Thyroid gland (tissue), 4 donors: ENCODE measurements at regions of chr9 and their contacts with region 1.

Region 1: DNA sequence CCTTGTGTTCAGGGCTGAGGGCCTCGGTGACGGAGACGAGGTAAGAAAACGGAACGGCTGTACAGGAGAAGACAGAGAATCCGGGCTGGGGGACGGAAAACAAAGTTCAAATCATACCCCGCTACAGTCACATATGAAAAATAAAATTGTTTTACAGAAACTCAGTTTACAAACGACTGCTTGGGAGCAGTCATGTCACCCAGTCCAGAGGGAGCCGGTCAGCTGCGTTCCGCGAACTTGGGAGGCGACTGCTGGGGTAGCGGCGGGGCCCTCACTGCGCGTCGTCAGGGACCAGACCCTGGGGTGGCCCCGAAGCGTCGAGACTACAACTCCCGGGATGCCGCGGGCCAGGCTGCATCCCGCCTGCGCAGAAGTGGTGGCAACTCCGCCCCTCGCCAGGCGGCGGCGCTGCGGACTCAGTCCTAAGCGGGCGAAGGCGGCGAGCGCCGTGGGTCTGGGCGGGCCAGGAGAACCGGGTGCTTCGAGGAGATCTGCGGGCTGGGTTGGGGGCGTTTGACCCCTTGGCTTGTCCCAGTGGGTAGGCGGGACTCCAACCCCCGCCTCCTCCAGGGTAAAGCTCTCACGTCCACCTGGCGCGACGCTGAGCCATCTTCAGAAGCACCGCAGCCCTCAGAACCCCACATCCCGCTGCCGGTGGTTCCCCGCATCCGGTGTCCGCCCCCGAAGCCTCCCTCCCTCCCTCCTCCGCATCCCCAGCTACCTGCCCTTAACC is 4.0 kb downstream of the SIT1 start:
- DNase-seq: peak; percentile 93 to 94
- H3K4me3 ChIP-seq: peak overlapping the region; percentile 17 to 54 (median 39)
- H3K27ac ChIP-seq: peak overlapping the region; percentile 78 to 92 (median 90)
- H3K4me1 ChIP-seq: peaks cover 5 to 13% of the 10 kb centered on the region in 2 donors
- H3K27me3 ChIP-seq: no peaks in the 10 kb centered on the region
- CTCF ChIP-seq: peak; percentile 83 to 99 (median 96)
- POLR2A ChIP-seq: peak; percentile 62 to 95

Region 2: DNA sequence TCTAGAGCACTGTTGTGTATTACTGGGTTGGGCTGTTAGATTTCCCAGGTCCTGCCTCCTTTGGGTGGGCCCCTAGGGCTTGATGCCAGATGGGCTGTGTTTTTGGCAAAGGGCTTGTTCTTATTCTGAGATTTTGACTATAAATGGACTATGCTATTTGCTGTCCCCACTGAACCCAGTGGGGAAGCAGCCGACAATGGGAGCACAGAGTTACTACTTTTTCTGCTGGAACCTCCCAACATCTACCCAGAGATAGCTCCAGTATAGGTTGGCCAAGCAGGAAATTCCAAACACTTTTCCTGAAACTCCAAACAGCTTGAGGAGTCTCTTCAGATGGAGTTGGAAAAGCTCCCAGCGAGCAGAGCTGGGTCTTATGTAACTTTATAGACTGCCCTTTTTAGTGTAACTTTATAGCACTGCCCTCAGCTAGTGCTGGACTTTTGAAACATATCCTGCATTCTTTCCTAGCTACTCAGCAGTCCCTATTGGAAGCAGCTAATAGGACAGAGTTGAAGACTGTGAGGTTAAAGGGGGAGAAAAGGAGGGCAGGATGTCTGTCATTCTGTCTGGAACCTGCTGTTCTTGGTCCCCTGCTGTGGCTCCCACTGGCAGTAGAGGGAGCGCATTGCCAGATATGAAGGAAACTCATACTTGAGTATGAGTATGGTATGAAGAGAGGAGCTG is 135.8 kb before region 1 on chr9:
- intact Hi-C with region 1: no loop called
- DNase-seq: peak; percentile 50 to 60
- H3K4me3 ChIP-seq: no peak overlapping the region
- H3K27ac ChIP-seq: peak overlapping the region; percentile 85 to 93 (median 88)
- H3K4me1 ChIP-seq: peaks cover 34 to 49% of the 10 kb centered on the region in 2 donors
- H3K27me3 ChIP-seq: no peaks in the 10 kb centered on the region
- CTCF ChIP-seq: peak in 3 of 6 experiments; percentile 8 to 30 (median 11)
- POLR2A ChIP-seq: peak in 1 of 2 donors; percentile 18

Region 3: DNA sequence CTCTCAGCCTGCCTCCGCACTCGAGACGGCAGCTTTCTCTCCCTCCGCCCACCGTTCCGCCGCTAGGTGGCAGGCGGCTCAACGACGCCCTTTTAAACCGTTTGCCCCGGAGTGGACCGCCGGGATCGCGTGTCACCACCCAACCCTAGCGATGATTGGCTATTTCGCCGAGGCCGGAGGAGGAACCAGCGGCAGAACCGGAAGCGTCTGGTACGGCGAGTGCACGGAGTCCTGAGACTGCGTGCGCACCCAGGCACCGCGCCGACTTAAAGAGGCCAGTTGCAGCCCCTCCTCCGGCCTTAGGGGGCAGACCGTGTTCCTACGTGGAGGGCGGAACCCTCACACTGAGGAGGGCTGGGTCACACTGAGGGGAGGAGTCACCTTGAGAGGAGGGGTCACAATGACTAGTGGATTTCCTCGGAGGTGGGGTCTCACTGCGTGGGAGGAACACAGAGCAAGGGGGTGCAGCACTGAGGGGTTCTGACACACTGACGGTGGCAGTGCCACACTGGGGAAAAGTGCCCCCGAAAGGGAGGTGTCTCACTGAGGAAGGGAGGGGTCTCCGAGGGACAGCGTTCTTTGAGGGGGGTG is 42.6 kb before region 1 on chr9:
- intact Hi-C with region 1: loop called (anchors 5 kb)
- DNase-seq: peak; percentile 100
- H3K4me3 ChIP-seq: peak overlapping the region; percentile 8 to 91 (median 76)
- H3K27ac ChIP-seq: peak overlapping the region; percentile 81 to 93 (median 87)
- H3K4me1 ChIP-seq: peaks cover 12 to 26% of the 10 kb centered on the region in 2 donors
- H3K27me3 ChIP-seq: no peaks in the 10 kb centered on the region
- CTCF ChIP-seq: peak; percentile 74 to 98 (median 94)
- POLR2A ChIP-seq: peak in 1 of 2 donors; percentile 91

Region 4: GRCh38 chr9:35732122-35732799 is 85.6 kb after region 1 on chr9 and contains the starts of genes CREB3 and TLN1:
- intact Hi-C with region 1: loop called (anchors 5 kb)
- DNase-seq: peak; percentile 99
- H3K4me3 ChIP-seq: peak within 1 kb of the TSS; percentile 82 to 90 (median 83)
- H3K27ac ChIP-seq: peak within 1 kb of the TSS; percentile 88 to 96 (median 89)
- H3K4me1 ChIP-seq: peaks cover 50 to 52% of the 10 kb centered on the region in 2 donors
- H3K27me3 ChIP-seq: no peaks in the 10 kb centered on the region
- CTCF ChIP-seq: no peak
- POLR2A ChIP-seq: peak in 1 of 2 donors; percentile 86
- total RNA-seq, gene CREB3: 44.9 to 73.0 (median 51.3) TPM
- total RNA-seq, gene TLN1: 142 to 245 (median 184) TPM

Region 5: DNA sequence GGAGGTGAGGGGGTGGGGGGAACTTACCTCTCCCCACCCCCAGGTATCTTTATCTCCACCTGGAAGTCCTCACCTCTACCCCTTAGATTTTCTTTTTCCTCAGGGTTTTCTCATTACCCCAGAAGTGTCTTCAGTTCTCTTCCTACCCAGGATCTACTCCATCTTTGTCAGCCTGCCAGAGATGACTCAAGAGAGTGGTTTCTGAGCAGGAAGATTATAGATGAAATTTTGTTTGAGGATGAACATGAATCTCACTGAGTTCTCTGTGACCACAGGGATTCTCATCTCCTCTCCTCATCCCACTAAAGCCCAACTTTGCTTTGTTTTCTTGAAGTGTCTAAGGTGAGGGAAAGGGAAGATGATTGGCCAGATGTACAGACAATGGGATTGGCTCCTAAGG is 173.4 kb after region 1 on chr9:
- intact Hi-C with region 1: loop called (anchors 5 kb)
- DNase-seq: no peak
- H3K4me3 ChIP-seq: no peak overlapping the region
- H3K27ac ChIP-seq: no peak overlapping the region
- H3K4me1 ChIP-seq: no peaks in the 10 kb centered on the region
- H3K27me3 ChIP-seq: no peaks in the 10 kb centered on the region
- CTCF ChIP-seq: no peak
- POLR2A ChIP-seq: no peak

Region 6: GRCh38 chr9:35882263-35882848 is 235.7 kb after region 1 on chr9:
- intact Hi-C with region 1: loop called (anchors 10 kb)
- DNase-seq: peak; percentile 86 to 92
- H3K4me3 ChIP-seq: no peak overlapping the region
- H3K27ac ChIP-seq: no peak overlapping the region
- H3K4me1 ChIP-seq: no peaks in the 10 kb centered on the region
- H3K27me3 ChIP-seq: no peaks in the 10 kb centered on the region
- CTCF ChIP-seq: peak; percentile 89 to 94 (median 94)
- POLR2A ChIP-seq: no peak